Activated CD4-positive, alpha-beta T cell treated with anti-CD3 and anti-CD28 coated beads for 36 hours (primary cell): ENCODE measurements at regions of chr12 and their contacts with region 1.

Region 1: DNA sequence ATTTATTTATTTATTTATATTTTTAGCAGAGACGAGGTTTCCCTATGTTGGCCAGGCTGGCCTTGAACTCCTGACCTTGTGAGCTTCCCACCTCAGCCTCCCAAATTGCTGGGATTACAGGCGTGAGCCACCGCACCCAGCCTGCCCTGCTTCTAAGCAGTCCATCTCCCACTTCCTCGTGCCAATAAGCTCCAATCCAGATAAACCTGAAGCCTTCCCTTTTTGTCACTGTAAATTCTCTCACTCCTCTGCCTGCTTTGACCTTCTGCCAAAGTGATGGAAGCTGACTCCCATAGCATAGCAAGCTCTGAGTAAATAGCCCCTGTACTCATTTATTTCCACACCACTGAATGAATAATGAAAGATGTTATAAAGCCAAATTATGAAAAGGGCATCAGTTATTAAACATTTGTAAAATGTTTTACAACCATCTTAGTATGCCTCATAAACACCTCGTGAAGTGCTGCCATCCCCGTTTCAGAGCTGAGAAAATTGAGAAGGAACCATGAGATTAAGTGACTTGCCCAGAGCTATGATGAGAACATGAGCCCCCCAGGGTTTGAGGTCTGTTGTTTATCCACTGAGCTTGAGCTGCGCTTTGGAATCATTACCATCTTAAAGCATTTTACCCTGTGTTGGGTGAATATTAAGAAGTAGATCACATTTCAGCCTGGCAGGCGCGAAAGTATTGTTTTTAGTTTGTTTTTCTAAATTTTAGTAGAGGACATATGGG is 30.4 kb downstream of the MANSC1 start:
- DNase-seq: no peak
- ATAC-seq: no peak
- H3K4me3 Mint-ChIP-seq: no peak overlapping the region
- H3K27ac Mint-ChIP-seq: no peak overlapping the region
- H3K4me1 Mint-ChIP-seq: peaks cover 2% of the 10 kb centered on the region
- H3K27me3 Mint-ChIP-seq: no peaks in the 10 kb centered on the region

Region 2: DNA sequence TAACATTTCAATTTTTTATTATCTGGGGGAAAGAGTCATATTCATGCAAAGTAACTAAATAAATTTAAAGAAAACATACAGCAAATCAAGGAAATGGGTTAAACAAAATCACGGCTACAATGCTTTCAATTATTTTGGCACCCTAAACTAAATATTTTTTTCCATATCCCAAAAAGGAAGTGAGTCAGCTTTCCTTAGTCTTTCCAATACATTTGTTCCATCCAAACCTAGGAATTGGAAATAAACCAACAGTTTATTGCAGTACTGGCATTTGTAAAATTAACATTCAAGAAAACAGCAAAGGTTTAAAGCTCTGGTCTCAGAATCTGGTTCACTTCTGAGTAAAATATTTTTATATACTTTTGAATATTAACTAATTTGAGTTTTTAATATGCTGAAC is 159.6 kb before region 1 on chr12:
- CTCF ChIA-PET with region 1: no interaction called
- POLR2A ChIA-PET with region 1: no interaction called
- intact Hi-C with region 1: loop called in 1 of 2 experiments (anchors 5 kb)
- DNase-seq: no peak
- ATAC-seq: no peak
- H3K4me3 Mint-ChIP-seq: no peak overlapping the region
- H3K27ac Mint-ChIP-seq: no peak overlapping the region
- H3K4me1 Mint-ChIP-seq: no peaks in the 10 kb centered on the region
- H3K27me3 Mint-ChIP-seq: no peaks in the 10 kb centered on the region